ENCODE measurements at regions of chr19 and their contacts with region 1.

Region 1: DNA sequence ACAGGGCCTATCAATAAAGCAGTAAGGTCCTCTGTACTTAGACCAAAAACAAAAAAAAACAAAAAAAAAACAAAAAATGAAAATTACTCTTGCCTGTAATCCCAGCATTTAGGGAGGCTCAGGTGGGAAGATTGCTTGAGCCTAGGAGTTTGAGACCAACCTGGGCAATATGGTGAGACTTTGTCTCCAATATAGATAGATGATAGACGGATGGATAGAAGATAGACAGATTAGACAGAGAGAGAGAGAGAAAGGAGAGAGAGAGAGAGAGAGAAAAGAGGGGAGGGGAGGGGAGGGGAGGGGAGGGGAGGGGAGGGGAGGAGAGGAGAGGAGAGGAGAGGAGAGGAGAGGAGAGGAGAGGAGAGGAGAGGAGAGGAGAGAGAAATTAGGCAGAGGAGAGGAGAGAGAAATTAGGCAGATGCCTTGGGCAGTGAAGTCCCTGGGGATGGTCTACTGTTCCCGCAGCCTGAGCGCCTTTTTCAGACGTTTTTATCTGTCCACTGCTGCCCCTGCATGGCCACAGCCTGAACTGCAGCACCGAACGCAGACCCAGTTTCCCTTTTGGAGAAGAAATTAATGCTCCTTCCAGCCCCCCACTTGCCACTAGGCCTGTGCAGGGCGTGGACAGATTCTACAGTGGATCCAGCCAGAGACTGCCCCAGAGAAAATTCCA is 9.8 kb upstream of the ZNF627 start:
- DNase-seq: peak; percentile 91
- H3K4me3 ChIP-seq: no peak overlapping the region
- H3K27ac ChIP-seq: peak overlapping the region in 5 of 8 donors; percentile 6 to 45 (median 24)
- H3K4me1 ChIP-seq: peaks cover 4 to 49% (median 26%) of the 10 kb centered on the region in 6 donors
- H3K27me3 ChIP-seq: no peaks in the 10 kb centered on the region
- CTCF ChIP-seq: peak; percentile 85 to 96 (median 93)
- POLR2A ChIP-seq: no peak

Region 2: GRCh38 chr19:11242864-11243797 is 344.3 kb before region 1 on chr19:
- intact Hi-C with region 1: loop called (anchors 5 kb)
- DNase-seq: peak; percentile 95
- H3K4me3 ChIP-seq: peak overlapping the region in 1 of 8 donors; percentile 13
- H3K27ac ChIP-seq: peak overlapping the region in 5 of 8 donors; percentile 36 to 61 (median 52)
- H3K4me1 ChIP-seq: peaks cover 0 to 30% (median 22%) of the 10 kb centered on the region in 6 donors
- H3K27me3 ChIP-seq: peaks cover 0 to 4% (median 0%) of the 10 kb centered on the region in 7 donors
- CTCF ChIP-seq: peak; percentile 39 to 94 (median 82)
- POLR2A ChIP-seq: no peak

Region 3: DNA sequence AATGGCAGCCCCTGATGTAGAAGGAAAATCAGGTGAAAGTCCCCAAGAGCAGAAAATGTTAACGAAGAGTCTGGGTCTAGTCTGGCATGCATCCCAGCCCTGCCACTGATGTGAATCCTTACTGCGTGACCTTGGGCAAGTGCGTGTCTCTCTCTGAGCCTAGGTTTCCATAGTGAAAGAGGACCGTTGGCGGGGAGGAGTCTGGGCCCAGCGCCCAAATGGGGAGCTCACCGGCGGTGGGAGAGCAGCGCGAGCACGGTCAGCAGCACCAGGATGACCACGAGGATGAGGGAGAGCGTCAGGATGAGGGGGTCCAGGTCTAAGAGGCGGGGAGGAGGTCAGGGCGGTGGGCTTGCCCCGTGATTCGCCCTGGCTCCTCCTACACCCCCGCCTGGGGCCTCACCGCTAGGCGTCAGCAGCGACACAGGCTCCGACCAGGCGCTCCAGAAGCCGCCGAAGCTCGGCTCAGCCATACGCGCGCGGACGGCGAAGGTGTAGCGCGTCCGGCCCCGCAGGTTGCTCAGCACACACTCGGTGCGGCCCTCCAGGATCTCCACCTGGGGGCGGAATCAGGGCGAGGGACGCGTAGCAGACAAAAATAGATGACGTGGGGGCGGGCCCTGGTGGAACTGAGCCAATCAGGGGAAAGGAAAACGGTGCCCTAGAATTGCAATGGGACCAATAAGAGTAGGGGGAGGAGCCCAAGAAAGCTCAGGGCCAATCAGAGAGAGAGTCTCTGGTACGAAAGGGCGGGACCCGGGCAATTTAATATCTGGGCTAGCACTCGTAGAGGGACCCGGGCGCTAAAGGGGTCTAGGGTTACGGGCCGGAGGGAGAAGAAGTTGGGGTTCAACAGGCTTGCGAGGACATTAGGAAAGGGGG is 206.5 kb before region 1 on chr19:
- intact Hi-C with region 1: no loop called
- DNase-seq: peak; percentile 98
- H3K4me3 ChIP-seq: peak overlapping the region; percentile 49 to 81 (median 61)
- H3K27ac ChIP-seq: peak overlapping the region; percentile 83 to 97 (median 94)
- H3K4me1 ChIP-seq: peaks cover 36 to 91% (median 75%) of the 10 kb centered on the region in 6 donors
- H3K27me3 ChIP-seq: peaks cover 0 to 26% (median 0%) of the 10 kb centered on the region in 7 donors
- CTCF ChIP-seq: peak; percentile 84 to 92 (median 88)
- POLR2A ChIP-seq: peak in 2 of 3 donors; percentile 78 to 92

Region 4: DNA sequence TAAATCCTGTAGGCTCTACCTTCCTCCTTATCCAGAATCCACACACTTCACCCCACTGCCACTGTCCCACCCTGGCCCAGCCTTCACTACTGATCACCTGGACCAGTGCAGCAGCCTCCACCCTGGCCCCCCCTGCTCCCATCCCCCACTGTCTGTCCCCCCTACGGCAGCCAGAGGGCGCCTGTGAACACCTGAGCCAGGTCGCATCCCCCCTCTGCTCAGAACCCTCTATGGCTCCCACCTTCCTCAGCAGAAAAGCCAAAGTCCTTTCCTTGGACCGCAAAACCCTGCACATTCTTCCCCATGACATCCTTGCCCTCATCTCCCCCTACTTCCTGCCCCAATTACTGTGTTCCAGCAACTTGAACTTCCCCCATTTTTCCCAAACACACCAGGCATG is 127.2 kb before region 1 on chr19:
- intact Hi-C with region 1: no loop called
- DNase-seq: no peak
- H3K4me3 ChIP-seq: no peak overlapping the region
- H3K27ac ChIP-seq: no peak overlapping the region
- H3K4me1 ChIP-seq: no peaks in the 10 kb centered on the region
- H3K27me3 ChIP-seq: peaks cover 0 to 26% (median 7%) of the 10 kb centered on the region in 7 donors
- CTCF ChIP-seq: peak in 3 of 11 experiments; percentile 11 to 33 (median 12)
- POLR2A ChIP-seq: no peak

Region 5: DNA sequence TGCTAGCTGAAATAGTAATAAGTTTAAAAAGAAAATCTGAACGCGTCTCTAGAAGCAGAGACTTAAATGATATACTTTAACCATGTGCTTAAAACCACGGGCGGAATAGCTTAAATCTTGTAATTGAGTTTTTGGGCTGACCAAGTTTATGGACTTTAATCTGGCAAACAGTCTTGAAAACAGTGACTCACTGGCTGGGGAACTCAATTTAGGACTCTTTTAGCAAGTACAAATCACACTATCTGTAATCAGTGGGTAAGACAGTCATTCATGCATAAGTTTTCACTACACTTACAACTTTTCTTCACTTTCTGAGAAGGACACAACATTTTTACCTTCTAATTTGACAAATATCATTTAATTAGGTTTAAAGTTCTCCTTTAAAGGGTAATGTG is 36.6 kb after region 1 on chr19:
- intact Hi-C with region 1: no loop called
- DNase-seq: no peak
- H3K4me3 ChIP-seq: peak overlapping the region in 1 of 8 donors; percentile 40
- H3K27ac ChIP-seq: no peak overlapping the region
- H3K4me1 ChIP-seq: peaks cover 0 to 21% (median 12%) of the 10 kb centered on the region in 6 donors
- H3K27me3 ChIP-seq: peaks cover 0 to 10% (median 0%) of the 10 kb centered on the region in 7 donors
- CTCF ChIP-seq: no peak
- POLR2A ChIP-seq: no peak

Measured in spleen (tissue), 13 donors.